ENCODE measurements at regions of chr21 and their contacts with region 1.

Region 1: DNA sequence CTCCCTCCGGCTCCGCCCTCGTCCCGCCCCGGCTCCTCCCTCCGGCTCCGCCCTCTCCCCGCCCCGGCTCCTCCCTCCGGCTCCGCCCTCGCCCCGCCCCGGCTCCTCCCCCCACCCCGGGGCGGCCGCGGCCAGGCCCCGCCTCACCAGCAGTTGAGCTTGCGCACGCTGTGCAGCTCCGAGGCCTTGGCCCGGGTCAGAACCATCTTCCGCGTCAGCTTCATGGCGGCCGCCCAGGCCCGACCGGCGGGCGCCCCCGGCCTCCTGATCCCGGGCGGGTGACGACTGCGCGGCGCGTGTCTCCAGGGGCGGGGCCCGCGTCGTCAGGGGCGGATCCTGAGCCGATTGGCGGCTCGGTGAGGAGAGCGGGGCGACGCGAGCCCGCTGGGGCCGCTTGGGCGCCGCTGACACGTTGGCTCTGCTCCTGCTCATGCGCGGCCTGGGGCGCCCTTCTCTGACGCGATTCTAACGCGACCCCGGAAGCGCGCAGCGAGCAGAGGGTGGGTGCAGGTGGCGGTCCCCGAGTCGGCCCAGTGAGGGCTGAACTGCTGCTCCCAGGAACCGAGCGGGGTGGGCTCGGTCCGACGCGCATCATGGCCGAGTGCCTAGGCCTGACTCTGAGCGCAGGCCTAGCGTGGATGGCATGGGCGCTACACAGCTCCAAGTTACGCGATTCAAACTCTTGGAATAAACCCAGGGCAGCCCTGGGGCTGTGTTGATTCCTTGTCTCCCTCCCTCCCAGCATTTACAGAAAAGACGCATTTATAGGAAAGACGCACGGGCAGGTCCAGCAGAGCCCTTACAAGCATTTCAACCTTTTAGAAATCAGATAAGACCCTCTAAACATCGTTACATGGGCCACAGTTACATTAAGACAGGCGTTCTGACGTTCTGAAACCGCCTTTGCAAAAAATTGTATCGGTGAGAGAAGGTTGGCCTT is at the start of gene CFAP410:
- DNase-seq: peak; percentile 88
- ATAC-seq: peak; percentile 85
- H3K4me3 ChIP-seq: peak within 1 kb of the TSS; percentile 81 to 98 (median 90)
- H3K27ac ChIP-seq: peak within 1 kb of the TSS; percentile 99
- H3K4me1 ChIP-seq: peaks cover 50% of the 10 kb centered on the region
- H3K27me3 ChIP-seq: no peaks in the 10 kb centered on the region; a peak in 1 of 5 replicates
- CTCF ChIP-seq: peak; percentile 25
- EP300 ChIP-seq: 0 out of 4 replicates have a peak, but pooled peaks of 1 of the 2 experiments have one; percentile 3
- POLR2A ChIP-seq: peak in 1 of 2 experiments; percentile 86; a peak in 2 of 4 replicates
- RAD21 ChIP-seq: peak; percentile 46; the same call in 1 of the 2 replicates
- total RNA-seq, gene CFAP410: 13.1 and 20.1 TPM in 2 replicates

Region 2: GRCh38 chr21:43916691-43917514 is 422.3 kb before region 1 on chr21:
- CTCF ChIA-PET with region 1: no interaction called
- POLR2A ChIA-PET with region 1: no interaction called
- in situ Hi-C with region 1: no loop called
- intact Hi-C with region 1: no loop called
- DNase-seq: no peak
- ATAC-seq: no peak
- H3K4me3 ChIP-seq: no peak overlapping the region
- H3K27ac ChIP-seq: no peak overlapping the region
- H3K4me1 ChIP-seq: peaks cover 40% of the 10 kb centered on the region
- H3K27me3 ChIP-seq: no peaks in the 10 kb centered on the region
- CTCF ChIP-seq: no peak
- EP300 ChIP-seq: no peak
- POLR2A ChIP-seq: no peak
- RAD21 ChIP-seq: no peak

Region 3: DNA sequence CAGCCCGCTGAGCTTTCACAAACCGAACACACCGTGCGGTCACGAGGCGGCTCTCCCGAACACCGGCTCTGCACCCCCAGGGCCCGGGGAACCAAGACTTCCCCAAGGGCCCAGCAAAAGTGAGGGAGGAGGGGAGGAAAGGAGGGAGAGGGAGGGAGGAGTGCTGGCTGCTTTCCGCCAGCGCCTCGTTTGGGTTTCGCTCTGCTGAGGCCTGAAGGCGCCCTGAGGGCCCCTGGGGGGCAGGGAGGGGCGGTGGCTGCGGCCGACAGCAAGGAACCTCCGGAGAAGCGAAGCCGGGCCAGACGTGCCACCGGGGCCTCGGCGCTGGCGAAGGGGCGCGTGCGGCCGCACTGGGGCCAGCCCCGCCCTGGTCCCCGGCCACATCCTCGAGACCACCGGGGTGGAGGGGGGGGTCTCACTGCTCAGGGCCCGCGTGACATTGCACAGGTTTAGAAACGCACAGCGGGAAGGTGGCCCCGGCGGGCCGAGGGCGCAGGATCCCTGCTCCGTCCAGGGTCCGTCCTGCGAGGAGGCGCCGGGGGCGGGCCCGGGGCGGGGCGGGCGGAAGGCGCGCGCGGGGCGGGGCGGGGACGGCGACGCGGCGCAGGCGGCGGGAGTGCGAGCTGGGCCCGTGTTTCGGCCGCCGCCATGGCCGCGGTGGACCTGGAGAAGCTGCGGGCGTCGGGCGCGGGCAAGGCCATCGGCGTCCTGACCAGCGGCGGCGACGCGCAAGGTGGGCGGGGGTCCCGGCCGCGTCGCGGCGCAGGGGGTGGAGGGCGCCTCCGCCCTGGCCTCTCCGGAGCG is 39.6 kb before region 1 on chr21 and contains the start of gene PFKL:
- CTCF ChIA-PET with region 1: no interaction called
- POLR2A ChIA-PET with region 1: interaction called, 27 read pairs
- in situ Hi-C with region 1: loop called (anchors 5 kb)
- intact Hi-C with region 1: no loop called
- DNase-seq: peak; percentile 24
- ATAC-seq: peak; percentile 31
- H3K4me3 ChIP-seq: peak within 1 kb of the TSS; percentile 66 to 80 (median 75)
- H3K27ac ChIP-seq: peak within 1 kb of the TSS; percentile 87
- H3K4me1 ChIP-seq: peaks cover 75% of the 10 kb centered on the region
- H3K27me3 ChIP-seq: peaks cover 9 to 26% of the 10 kb centered on the region in 2 experiments
- CTCF ChIP-seq: no peak; the same call in 1 of the 2 replicates
- EP300 ChIP-seq: no peak
- POLR2A ChIP-seq: peak in 1 of 2 experiments; percentile 49; a peak in 2 of 4 replicates
- RAD21 ChIP-seq: no peak; the same call in 1 of the 2 replicates
- total RNA-seq, gene PFKL: 87.6 and 106 TPM in 2 replicates

Region 4: DNA sequence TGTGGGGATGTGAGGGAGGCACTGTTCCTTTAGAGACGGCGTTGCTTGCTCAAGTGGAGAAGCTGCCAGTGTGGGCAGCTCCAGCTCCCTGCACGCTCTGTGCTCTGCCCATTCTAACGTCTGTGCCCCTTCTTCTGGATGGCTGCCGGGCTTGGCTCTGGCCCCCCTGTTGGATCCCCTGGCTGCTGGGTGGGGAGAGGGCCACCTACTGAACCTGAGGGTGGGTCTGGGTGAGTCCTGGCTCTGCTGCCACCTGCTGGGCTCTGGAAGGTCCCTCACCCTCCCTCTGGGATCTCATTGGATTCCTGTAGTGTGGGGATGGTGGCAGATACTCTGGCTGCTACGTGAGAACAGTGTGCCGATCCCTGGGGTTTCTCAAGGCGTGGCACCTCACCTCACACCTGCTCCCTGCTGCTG is 34.4 kb before region 1 on chr21:
- CTCF ChIA-PET with region 1: no interaction called
- POLR2A ChIA-PET with region 1: interaction called, 27 read pairs
- in situ Hi-C with region 1: loop called (anchors 5 kb)
- intact Hi-C with region 1: no loop called
- DNase-seq: peak; percentile 38
- ATAC-seq: peak; percentile 30
- H3K4me3 ChIP-seq: no peak overlapping the region
- H3K27ac ChIP-seq: peak overlapping the region; percentile 87
- H3K4me1 ChIP-seq: peaks cover 48% of the 10 kb centered on the region
- H3K27me3 ChIP-seq: no peaks in the 10 kb centered on the region
- CTCF ChIP-seq: peak; percentile 82
- EP300 ChIP-seq: no peak
- POLR2A ChIP-seq: no peak
- RAD21 ChIP-seq: peak; percentile 60

Region 5: GRCh38 chr21:44454747-44455523 is 115.7 kb after region 1 on chr21 and contains the start of gene LRRC3:
- CTCF ChIA-PET with region 1: no interaction called
- POLR2A ChIA-PET with region 1: interaction called, 33 read pairs
- in situ Hi-C with region 1: no loop called
- intact Hi-C with region 1: loop called (anchors 5 kb)
- DNase-seq: peak; percentile 82
- ATAC-seq: peak; percentile 61
- H3K4me3 ChIP-seq: peak within 1 kb of the TSS; percentile 75 to 87 (median 75)
- H3K27ac ChIP-seq: peak within 1 kb of the TSS; percentile 85
- H3K4me1 ChIP-seq: peaks cover 51% of the 10 kb centered on the region
- H3K27me3 ChIP-seq: no peaks in the 10 kb centered on the region; a peak in 2 of 5 replicates
- CTCF ChIP-seq: no peak
- EP300 ChIP-seq: no peak
- POLR2A ChIP-seq: no peak
- RAD21 ChIP-seq: no peak
- total RNA-seq, gene LRRC3: 3.9 and 4.8 TPM in 2 replicates